Testis (tissue), 5 donors: ENCODE measurements at regions of chr6 and their contacts with region 1.

Region 1: GRCh38 chr6:41367700-41368099 is 32.3 kb downstream of the NCR2 start:
- DNase-seq: peak; percentile 76
- H3K4me3 ChIP-seq: no peak overlapping the region
- H3K27ac ChIP-seq: no peak overlapping the region
- H3K4me1 ChIP-seq: peaks cover 7% of the 10 kb centered on the region
- H3K27me3 ChIP-seq: no peaks in the 10 kb centered on the region
- CTCF ChIP-seq: peak; percentile 43 to 59 (median 51)
- POLR2A ChIP-seq: no peak

Region 2: DNA sequence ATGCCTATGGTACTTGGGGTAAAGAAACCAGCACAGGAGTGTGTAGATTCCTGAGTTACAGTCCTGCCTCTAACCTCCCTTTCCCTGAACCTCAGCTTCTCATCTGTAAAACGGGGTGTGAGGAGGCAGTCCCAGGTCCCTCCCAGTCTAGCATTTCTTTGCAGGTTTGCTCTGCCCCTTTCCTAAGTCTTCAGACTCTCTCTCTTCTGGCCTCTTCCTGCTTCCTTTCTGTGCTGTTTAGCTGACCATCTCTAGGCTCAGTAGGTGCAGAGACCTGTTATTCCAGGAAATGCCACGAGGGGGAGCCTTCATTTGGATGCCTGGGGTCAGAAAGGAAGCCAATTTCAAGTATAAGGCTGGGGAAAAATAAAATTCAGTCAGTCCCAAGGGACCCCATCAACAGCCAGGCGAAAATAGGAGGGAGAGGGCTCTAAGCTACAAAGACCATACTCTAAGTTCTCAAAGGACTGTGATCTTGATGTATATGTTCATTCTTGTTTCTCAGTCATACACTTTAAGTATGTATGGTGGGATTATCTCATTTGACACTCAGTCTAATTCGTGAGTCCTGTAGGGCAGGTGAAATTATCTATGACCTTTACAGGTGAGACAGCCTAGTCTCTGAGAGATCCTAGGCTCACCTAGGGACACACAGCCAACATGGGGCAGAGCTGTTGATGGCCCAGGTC is 56.8 kb after region 1 on chr6:
- intact Hi-C with region 1: no loop called
- DNase-seq: peak; percentile 94
- H3K4me3 ChIP-seq: no peak overlapping the region
- H3K27ac ChIP-seq: no peak overlapping the region
- H3K4me1 ChIP-seq: peaks cover 17% of the 10 kb centered on the region
- H3K27me3 ChIP-seq: no peaks in the 10 kb centered on the region
- CTCF ChIP-seq: peak; percentile 73 to 87 (median 86)
- POLR2A ChIP-seq: no peak

Region 3: GRCh38 chr6:41591859-41592502 is 224.3 kb after region 1 on chr6:
- intact Hi-C with region 1: loop called (anchors 5 kb)
- DNase-seq: peak; percentile 86
- H3K4me3 ChIP-seq: no peak overlapping the region
- H3K27ac ChIP-seq: no peak overlapping the region
- H3K4me1 ChIP-seq: peaks cover 3% of the 10 kb centered on the region
- H3K27me3 ChIP-seq: no peaks in the 10 kb centered on the region
- CTCF ChIP-seq: peak; percentile 94 to 98 (median 94)
- POLR2A ChIP-seq: no peak

Region 4: DNA sequence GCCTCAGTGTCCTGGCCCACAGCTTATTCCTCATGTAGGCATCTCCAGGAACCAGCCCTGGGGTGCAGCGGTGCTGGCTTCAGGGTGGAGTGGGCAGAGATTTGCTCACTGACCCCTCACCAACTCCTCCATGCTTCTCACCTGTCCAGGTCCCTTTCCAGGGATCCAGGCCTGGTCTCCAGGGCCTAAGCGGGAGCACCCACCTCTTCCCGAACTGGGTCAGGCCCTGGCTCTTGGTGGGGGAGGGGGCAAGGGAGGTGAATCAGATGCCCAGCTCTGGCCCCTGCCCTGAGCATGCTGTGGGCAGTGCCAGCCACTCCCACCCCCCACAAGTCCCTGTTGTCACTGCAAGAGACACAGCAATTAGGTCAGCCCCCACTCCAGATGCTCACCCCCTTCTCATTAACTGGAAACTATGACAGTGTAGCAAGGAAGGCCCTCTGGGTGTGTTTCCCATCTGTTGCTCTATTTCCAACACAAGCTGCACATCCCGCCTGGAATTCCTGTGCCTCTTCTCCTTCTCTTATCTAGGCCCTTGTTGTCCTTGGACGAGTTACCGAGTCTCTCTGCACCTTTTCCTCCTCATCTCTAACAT is 307.6 kb after region 1 on chr6:
- intact Hi-C with region 1: loop called (anchors 5 kb)
- DNase-seq: no peak
- H3K4me3 ChIP-seq: no peak overlapping the region
- H3K27ac ChIP-seq: no peak overlapping the region
- H3K4me1 ChIP-seq: no peaks in the 10 kb centered on the region
- H3K27me3 ChIP-seq: no peaks in the 10 kb centered on the region
- CTCF ChIP-seq: no peak
- POLR2A ChIP-seq: no peak

Region 5: DNA sequence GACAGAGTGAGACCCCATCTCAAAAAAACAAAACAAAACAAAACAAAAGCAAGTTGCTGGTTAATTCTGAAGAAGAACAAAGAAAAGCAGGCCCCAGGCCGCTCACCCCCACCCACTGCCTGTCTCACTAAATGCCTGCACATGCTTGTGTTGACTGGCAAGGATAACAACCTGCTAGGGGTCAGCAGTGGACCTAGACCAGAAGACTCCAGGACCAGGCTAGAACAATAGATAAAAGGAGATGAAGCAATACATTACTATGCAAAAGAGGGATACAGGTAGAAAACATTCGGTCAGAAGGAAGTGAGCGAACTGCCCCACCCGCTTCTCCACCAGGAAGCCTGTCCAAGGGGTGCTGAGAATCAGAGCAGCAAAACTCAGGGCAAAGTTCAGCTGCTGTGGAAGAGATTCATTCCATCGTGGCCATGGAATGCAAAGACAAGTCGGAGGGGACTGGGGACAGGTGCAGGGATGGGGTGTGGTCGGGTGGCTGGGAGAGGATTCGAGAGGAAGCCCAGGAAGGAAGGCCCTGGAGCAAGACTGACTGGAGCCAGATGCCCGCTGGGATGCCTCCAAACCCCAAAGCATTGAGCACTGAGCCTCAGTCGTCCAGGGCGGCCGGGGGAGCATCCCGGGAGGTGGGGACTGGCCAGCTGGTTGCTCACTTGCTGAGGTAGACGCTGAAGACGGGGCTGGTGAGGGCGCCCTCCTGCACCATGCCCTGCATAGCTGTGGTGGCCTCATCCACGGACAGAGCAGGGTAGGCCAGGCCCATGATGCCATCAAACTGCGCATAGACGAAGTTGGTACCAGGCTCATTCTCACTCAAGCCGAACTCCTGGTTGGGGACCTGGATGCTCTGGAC is 374.2 kb after region 1 on chr6:
- intact Hi-C with region 1: no loop called
- DNase-seq: no peak
- H3K4me3 ChIP-seq: no peak overlapping the region
- H3K27ac ChIP-seq: no peak overlapping the region
- H3K4me1 ChIP-seq: no peaks in the 10 kb centered on the region
- H3K27me3 ChIP-seq: no peaks in the 10 kb centered on the region
- CTCF ChIP-seq: no peak
- POLR2A ChIP-seq: no peak